H1 (cell line): ENCODE measurements at regions of chr7 and their contacts with region 1.

Region 1: DNA sequence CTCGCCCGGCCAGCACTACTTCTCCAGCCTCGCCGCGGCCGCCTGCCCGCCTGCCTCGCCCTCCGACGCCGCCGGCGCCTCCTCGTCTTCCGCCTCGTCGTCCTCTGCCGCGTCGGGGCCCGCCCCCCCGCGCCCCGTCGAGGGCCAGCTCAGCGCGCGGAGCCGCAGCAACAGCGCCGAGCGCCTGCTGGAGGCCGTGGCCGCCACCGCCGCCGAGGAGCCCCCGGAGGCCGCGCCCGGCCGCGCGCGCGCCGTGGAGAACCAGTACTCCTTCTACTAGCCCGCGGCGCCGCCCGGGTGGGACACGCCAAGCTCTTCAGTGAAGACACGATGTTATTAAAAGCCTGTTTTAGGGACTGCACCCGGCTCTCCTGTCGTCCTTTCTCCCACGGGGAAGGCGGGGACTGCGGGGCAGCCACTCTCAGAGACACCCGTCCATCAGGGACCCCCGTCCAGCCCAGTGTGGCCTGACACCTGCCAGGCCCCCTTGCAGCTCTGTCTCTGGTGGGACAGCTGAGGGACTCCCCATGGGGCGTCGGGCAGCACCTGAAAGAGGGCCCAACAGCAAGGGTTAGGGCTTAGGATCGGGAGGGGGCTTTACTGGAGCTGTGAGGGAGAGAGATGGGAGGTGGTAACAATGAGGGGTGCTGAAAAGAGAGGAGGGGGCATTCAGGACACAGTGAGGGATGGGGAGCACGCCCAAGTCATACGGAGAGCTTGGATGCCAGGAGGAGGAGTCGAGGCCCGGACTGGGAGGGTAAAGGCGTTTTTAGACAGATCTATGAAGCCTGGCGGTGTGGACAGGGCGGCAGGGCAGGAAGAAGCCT is 34.7 kb downstream of the SPDYE6 start:
- DNase-seq: peak in 1 of 2 experiments; percentile 74
- H3K4me3 ChIP-seq: peak overlapping the region in 3 of 4 experiments; percentile 12 to 44 (median 23); a peak in 6 of 8 replicates
- H3K27ac ChIP-seq: no peak overlapping the region
- H3K4me1 ChIP-seq: peaks cover 4 to 12% (median 8%) of the 10 kb centered on the region in 4 experiments; a peak in 6 of 7 replicates
- H3K27me3 ChIP-seq: peaks cover 0 to 2% (median 0%) of the 10 kb centered on the region in 4 experiments; a peak in 3 of 7 replicates
- CTCF ChIP-seq: peak; percentile 13 to 43 (median 21)
- EP300 ChIP-seq: no peak
- POLR2A ChIP-seq: no peak
- RAD21 ChIP-seq: peak in 1 of 2 experiments; percentile 38; a peak in 2 of 4 replicates

Region 2: GRCh38 chr7:102306875-102307677 is 14.5 kb before region 1 on chr7:
- CTCF ChIA-PET with region 1: interaction called, 134 read pairs
- POLR2A ChIA-PET with region 1: interaction called, 4 read pairs
- DNase-seq: peak in 1 of 2 experiments; percentile 47
- H3K4me3 ChIP-seq: no peak overlapping the region
- H3K27ac ChIP-seq: no peak overlapping the region
- H3K4me1 ChIP-seq: peaks cover 5 to 13% (median 9%) of the 10 kb centered on the region in 4 experiments
- H3K27me3 ChIP-seq: no peaks in the 10 kb centered on the region
- CTCF ChIP-seq: no peak
- EP300 ChIP-seq: no peak
- POLR2A ChIP-seq: no peak
- RAD21 ChIP-seq: no peak